Posterior cingulate gyrus (tissue), 11 donors: ENCODE measurements at regions of chr15 and their contacts with region 1.

Region 1: GRCh38 chr15:66946578-66947164 is 118.7 kb upstream of the SMAD3 start:
- DNase-seq: peak in 8 of 10 donors; percentile 59 to 94 (median 68)

Region 2: GRCh38 chr15:67303490-67304363 is 357.1 kb after region 1 on chr15:
- intact Hi-C with region 1: loop called (anchors 2 kb)
- DNase-seq: no peak

Region 3: GRCh38 chr15:67433495-67434099 is 486.9 kb after region 1 on chr15:
- intact Hi-C with region 1: loop called (anchors 2 kb)
- DNase-seq: peak in 3 of 10 donors; percentile 16 to 80 (median 29)